Naive thymus-derived CD4-positive, alpha-beta T cell (primary cell): ENCODE measurements at regions of chr12 and their contacts with region 1.

Region 1: DNA sequence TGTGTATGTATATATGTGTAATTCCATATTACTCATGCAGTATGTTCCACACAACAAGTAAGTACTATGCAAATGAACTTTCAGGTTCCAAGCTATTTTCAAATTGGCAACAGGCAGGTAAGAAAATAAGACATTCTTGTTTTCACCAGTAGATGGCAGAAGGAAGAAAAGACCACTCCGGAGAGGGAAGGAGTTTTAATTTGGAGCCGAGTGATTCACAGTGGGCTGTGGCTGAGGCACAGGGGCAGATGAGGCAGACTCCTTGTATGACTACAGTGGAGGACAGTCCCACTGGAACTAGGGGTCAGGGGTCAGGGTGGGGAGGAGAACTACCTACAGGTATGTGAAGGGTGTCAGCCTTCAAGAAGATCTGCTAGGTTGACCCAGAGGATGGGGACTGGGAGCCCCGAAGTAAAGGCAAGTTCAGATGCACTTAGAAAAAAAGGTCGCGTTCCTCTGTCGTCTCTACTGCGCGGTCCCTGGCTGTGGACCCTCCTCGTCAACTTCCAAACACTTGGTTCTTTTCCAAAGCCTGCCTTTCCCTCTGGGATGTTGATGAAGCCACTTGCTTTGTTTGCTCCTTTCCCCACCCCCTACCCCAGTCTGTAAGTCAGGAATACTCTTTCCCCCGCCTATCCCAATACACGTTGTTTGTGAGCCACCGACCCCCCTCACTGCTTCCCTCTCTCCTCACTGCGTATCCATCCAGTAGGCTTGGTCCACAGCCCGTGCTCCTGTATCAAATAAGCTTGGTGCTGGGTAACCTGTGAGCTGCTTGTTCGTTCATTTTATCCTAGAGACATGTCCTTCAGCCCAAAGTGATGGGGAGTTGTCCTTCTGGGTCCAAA is 24.1 kb downstream of the DDX47 start:
- DNase-seq: peak in 8 of 9 donors; percentile 34 to 68 (median 52)
- ATAC-seq: peak; percentile 80
- H3K4me3 ChIP-seq: no peak overlapping the region
- H3K4me3 Mint-ChIP-seq: peak overlapping the region; percentile 15 to 74 (median 35)
- H3K27ac ChIP-seq: no peak overlapping the region
- H3K27ac Mint-ChIP-seq: peak overlapping the region; percentile 40 to 95 (median 85)
- H3K4me1 ChIP-seq: peaks cover 0 to 26% of the 10 kb centered on the region in 2 donors
- H3K4me1 Mint-ChIP-seq: peaks cover 11 to 37% (median 34%) of the 10 kb centered on the region in 7 donors
- H3K27me3 ChIP-seq: no peaks in the 10 kb centered on the region
- H3K27me3 Mint-ChIP-seq: no peaks in the 10 kb centered on the region

Region 2: GRCh38 chr12:12813120-12814101 is 23.8 kb before region 1 on chr12 and contains the start of gene DDX47:
- CTCF ChIA-PET with region 1: interaction called, 9 read pairs
- POLR2A ChIA-PET with region 1: interaction called, 7 read pairs
- intact Hi-C with region 1: loop called in 1 of 2 experiments (anchors 2 kb)
- DNase-seq: peak; percentile 91 to 99 (median 96)
- ATAC-seq: peak; percentile 97
- H3K4me3 ChIP-seq: peak within 1 kb of the TSS; percentile 96
- H3K4me3 Mint-ChIP-seq: peak within 1 kb of the TSS; percentile 89 to 99 (median 96)
- H3K27ac ChIP-seq: peak within 1 kb of the TSS; percentile 99
- H3K27ac Mint-ChIP-seq: peak within 1 kb of the TSS; percentile 84 to 99 (median 97)
- H3K4me1 ChIP-seq: peaks cover 28 to 41% of the 10 kb centered on the region in 2 donors
- H3K4me1 Mint-ChIP-seq: peaks cover 36 to 84% (median 69%) of the 10 kb centered on the region in 7 donors
- H3K27me3 ChIP-seq: no peaks in the 10 kb centered on the region
- H3K27me3 Mint-ChIP-seq: no peaks in the 10 kb centered on the region
- total RNA-seq, gene DDX47: 71.6 to 154 (median 75.5) TPM

Region 3: GRCh38 chr12:12890815-12891645 is 53.8 kb after region 1 on chr12 and contains the start of gene GPRC5A:
- CTCF ChIA-PET with region 1: interaction called, 24 read pairs
- POLR2A ChIA-PET with region 1: interaction called, 8 read pairs
- intact Hi-C with region 1: loop called (anchors 1 to 5 kb)
- DNase-seq: peak in 8 of 9 donors; percentile 19 to 50 (median 34)
- ATAC-seq: peak; percentile 73
- H3K4me3 ChIP-seq: peak within 1 kb of the TSS; percentile 65
- H3K4me3 Mint-ChIP-seq: peak within 1 kb of the TSS; percentile 82 to 94 (median 90)
- H3K27ac ChIP-seq: no peak within 1 kb of the TSS
- H3K27ac Mint-ChIP-seq: peak within 1 kb of the TSS in 7 of 9 donors; percentile 34 to 84 (median 72)
- H3K4me1 ChIP-seq: peaks cover 0 to 3% of the 10 kb centered on the region in 2 donors
- H3K4me1 Mint-ChIP-seq: peaks cover 0 to 10% (median 6%) of the 10 kb centered on the region in 7 donors
- H3K27me3 ChIP-seq: peaks cover 0 to 4% of the 10 kb centered on the region in 2 donors
- H3K27me3 Mint-ChIP-seq: peaks cover 6 to 62% (median 14%) of the 10 kb centered on the region in 5 donors
- total RNA-seq, gene GPRC5A: 0.05 to 0.93 (median 0.15) TPM in 4 of 5 experiments, not detected in the other

Region 4: GRCh38 chr12:12983420-12984035 is 146.3 kb after region 1 on chr12:
- CTCF ChIA-PET with region 1: interaction called, 4 read pairs
- POLR2A ChIA-PET with region 1: no interaction called
- intact Hi-C with region 1: loop called in 1 of 2 experiments (anchors 1 kb)
- DNase-seq: peak in 5 of 9 donors; percentile 4 to 43 (median 19)
- ATAC-seq: peak; percentile 57
- H3K4me3 ChIP-seq: no peak overlapping the region
- H3K4me3 Mint-ChIP-seq: no peak overlapping the region
- H3K27ac ChIP-seq: no peak overlapping the region
- H3K27ac Mint-ChIP-seq: no peak overlapping the region
- H3K4me1 ChIP-seq: no peaks in the 10 kb centered on the region
- H3K4me1 Mint-ChIP-seq: no peaks in the 10 kb centered on the region
- H3K27me3 ChIP-seq: no peaks in the 10 kb centered on the region
- H3K27me3 Mint-ChIP-seq: no peaks in the 10 kb centered on the region

Region 5: DNA sequence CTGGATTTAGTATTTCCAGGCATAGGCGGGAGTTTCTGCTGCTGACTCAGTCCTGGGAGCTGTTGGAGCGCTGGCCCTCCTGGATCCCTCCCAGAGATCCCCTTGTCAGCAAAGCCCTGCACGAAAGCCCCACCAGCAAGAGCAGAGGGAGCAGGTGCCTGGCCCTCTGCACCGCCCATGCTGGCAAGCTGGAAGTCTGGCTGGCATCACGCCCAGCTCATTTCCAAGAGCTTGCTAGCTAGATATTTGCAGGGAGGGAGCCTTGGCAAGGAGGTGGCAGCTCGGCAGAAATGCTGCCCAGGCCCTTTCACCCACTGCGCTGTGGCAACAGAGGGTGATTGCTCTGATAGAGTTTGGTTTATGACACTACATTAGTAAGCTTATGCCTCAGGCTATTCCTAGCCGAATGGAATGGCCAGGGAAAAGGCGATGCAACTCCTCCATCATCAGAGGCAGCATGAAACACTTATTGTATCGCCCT is 553.2 kb after region 1 on chr12:
- CTCF ChIA-PET with region 1: no interaction called
- POLR2A ChIA-PET with region 1: no interaction called
- intact Hi-C with region 1: no loop called
- DNase-seq: no peak
- ATAC-seq: no peak
- H3K4me3 ChIP-seq: no peak overlapping the region
- H3K4me3 Mint-ChIP-seq: no peak overlapping the region
- H3K27ac ChIP-seq: no peak overlapping the region
- H3K27ac Mint-ChIP-seq: no peak overlapping the region
- H3K4me1 ChIP-seq: no peaks in the 10 kb centered on the region
- H3K4me1 Mint-ChIP-seq: no peaks in the 10 kb centered on the region
- H3K27me3 ChIP-seq: no peaks in the 10 kb centered on the region
- H3K27me3 Mint-ChIP-seq: peaks cover 0 to 11% (median 4%) of the 10 kb centered on the region in 5 donors